Heart right ventricle (tissue), 16 donors: ENCODE measurements at regions of chr1 and their contacts with region 1.

Region 1: GRCh38 chr1:62941780-62942179 is 157.8 kb downstream of the ATG4C start:
- DNase-seq: no peak
- ATAC-seq: peak in 2 of 8 donors; percentile 31 to 43
- H3K4me3 ChIP-seq: no peak overlapping the region
- H3K27ac ChIP-seq: no peak overlapping the region
- H3K4me1 ChIP-seq: no peaks in the 10 kb centered on the region
- H3K27me3 ChIP-seq: peaks cover 0 to 8% (median 0%) of the 10 kb centered on the region in 7 donors
- CTCF ChIP-seq: no peak

Region 2: DNA sequence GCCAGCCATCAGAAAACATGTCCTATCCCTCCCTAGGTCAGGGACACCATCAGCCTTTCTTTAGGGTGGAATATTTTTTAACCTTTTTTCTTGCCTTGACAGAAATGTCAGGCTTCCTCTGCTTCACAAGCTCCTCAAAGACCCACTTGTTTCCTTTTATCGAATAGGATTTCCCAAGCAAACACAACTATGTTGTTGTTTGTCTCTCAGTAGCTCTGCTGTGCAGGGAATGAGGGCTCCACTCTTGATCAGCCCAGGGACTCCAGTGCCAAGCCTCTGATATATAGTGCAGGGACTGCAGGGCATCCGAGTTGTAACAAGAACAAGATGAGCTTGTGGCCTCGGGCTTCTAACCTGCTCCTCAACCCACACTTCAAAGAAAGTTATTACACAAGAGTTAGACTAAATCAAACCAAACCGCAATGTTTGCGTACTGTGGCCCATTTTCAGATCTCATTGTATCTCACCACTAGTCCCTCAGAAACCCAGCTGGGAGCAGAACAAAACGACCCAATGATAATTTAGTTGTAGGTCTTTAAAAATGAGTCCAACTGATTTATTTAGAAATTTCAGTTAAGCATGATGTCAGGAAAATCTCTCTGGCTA is 49.7 kb before region 1 on chr1:
- intact Hi-C with region 1: loop called in 1 of 10 experiments (anchors 1 kb)
- DNase-seq: no peak
- ATAC-seq: no peak
- H3K4me3 ChIP-seq: no peak overlapping the region
- H3K27ac ChIP-seq: no peak overlapping the region
- H3K4me1 ChIP-seq: no peaks in the 10 kb centered on the region
- H3K27me3 ChIP-seq: peaks cover 0 to 7% (median 3%) of the 10 kb centered on the region in 7 donors
- CTCF ChIP-seq: no peak

Region 3: DNA sequence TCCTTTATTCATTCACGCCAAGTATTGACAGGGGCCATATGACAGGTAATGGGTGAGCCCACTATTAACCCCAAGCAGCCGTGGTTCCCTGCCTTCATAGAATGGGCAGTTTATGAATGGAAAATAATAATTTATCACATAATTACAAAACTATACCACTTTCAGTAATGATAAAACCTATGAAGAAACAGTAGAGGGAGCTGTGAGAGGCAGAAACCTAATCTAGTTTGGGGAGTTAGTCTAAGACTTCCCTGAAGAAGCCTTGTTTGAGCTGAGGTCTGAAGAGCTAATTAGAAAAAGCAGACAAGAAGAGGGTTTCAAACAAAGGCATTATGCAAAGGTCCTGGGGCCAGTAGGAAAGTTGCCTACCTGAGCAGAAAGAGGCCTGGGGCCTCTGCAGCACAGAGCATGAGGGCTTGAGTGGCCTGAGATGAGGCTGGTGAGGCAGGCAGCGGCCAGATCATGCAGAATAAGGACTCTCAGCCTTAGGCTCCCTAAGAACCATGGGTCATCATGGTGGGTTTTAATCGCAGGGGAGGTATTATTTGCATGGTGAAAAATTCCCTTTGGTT is 15.0 kb before region 1 on chr1:
- intact Hi-C with region 1: no loop called
- DNase-seq: no peak
- ATAC-seq: no peak
- H3K4me3 ChIP-seq: no peak overlapping the region
- H3K27ac ChIP-seq: no peak overlapping the region
- H3K4me1 ChIP-seq: no peaks in the 10 kb centered on the region
- H3K27me3 ChIP-seq: peaks cover 0 to 16% (median 9%) of the 10 kb centered on the region in 7 donors
- CTCF ChIP-seq: no peak